HEK293T (cell line): ENCODE measurements at regions of chr17 and their contacts with region 1.

Region 1: GRCh38 chr17:38333635-38334295 is 10.0 kb downstream of the GPR179 start:
- DNase-seq: peak; percentile 71

Region 2: GRCh38 chr17:38322091-38322779 is 11.5 kb before region 1 on chr17:
- CTCF ChIA-PET with region 1: interaction called, 25 read pairs
- POLR2A ChIA-PET with region 1: interaction called, 3 read pairs
- DNase-seq: peak; percentile 68

Region 3: GRCh38 chr17:38415250-38416194 is 81.8 kb after region 1 on chr17:
- CTCF ChIA-PET with region 1: interaction called, 20 read pairs
- POLR2A ChIA-PET with region 1: interaction called, 10 read pairs
- DNase-seq: peak; percentile 32